GM12878 (cell line): ENCODE measurements at regions of chr3 and their contacts with region 1.

Region 1: GRCh38 chr3:138705675-138706074 is 97.1 kb downstream of the FAIM start:
- DNase-seq: no peak
- ATAC-seq: no peak
- H3K4me3 ChIP-seq: no peak overlapping the region
- H3K27ac ChIP-seq: no peak overlapping the region
- H3K4me1 ChIP-seq: no peaks in the 10 kb centered on the region
- H3K27me3 ChIP-seq: no peaks in the 10 kb centered on the region
- CTCF ChIP-seq: no peak
- EP300 ChIP-seq: no peak
- POLR2A ChIP-seq: no peak
- RAD21 ChIP-seq: no peak

Region 2: DNA sequence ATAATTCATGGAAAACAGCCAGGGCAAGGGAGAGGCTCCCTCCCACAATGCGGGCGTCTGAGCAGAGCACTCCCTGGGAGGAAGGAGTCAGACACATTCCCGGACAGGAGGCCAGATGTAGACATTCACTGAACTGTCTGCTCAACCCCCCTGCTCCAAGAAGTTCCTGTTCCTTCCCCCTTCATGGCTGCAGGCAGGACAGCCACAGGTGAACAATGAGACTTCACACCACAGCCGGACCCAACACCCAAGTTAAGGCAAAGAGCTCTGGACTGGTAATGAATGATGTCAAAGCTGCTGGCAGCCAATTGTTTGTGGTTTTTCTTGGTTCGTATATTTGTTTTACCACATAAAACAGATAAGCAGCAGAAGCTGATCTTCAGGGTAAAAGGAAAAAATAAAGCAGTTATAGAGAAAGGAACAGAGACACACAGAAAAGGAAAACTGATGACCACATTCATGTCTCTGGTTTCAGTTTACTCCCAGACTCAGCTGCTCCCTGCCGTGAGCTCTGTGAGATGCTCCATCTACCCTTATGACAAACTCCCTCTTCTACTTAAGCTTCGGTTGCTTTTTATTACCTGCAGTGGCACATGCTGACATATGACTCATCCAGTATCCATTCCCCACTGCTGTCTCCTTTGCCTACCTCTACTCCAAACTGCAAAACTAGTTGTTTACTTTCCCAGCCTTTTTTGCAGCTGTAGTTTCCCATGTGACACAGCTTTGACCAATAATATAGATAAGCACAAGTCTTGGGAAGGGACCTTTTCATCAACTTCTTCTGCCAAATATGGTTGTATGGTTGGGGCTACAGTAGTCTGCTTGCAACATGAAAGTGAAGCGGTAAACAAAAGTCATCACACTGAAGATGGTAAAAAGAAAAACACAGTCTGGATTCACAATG is 623.3 kb before region 1 on chr3:
- CTCF ChIA-PET with region 1: no interaction called
- POLR2A ChIA-PET with region 1: no interaction called
- RAD21 ChIA-PET with region 1: no interaction called
- SMC1A ChIA-PET with region 1: no interaction called
- in situ Hi-C with region 1: no loop called
- intact Hi-C with region 1: no loop called
- DNase-seq: peak; percentile 27
- ATAC-seq: peak; percentile 77
- H3K4me3 ChIP-seq: no peak overlapping the region
- H3K27ac ChIP-seq: no peak overlapping the region
- H3K4me1 ChIP-seq: peaks cover 8% of the 10 kb centered on the region
- H3K27me3 ChIP-seq: peaks cover 0 to 2% of the 10 kb centered on the region in 2 experiments; a peak in 2 of 4 replicates
- CTCF ChIP-seq: no peak
- EP300 ChIP-seq: no peak
- POLR2A ChIP-seq: no peak
- RAD21 ChIP-seq: no peak

Region 3: GRCh38 chr3:138513090-138513843 is 192.4 kb before region 1 on chr3:
- CTCF ChIA-PET with region 1: no interaction called
- POLR2A ChIA-PET with region 1: no interaction called
- RAD21 ChIA-PET with region 1: no interaction called
- SMC1A ChIA-PET with region 1: no interaction called
- in situ Hi-C with region 1: no loop called
- intact Hi-C with region 1: no loop called
- DNase-seq: peak; percentile 9
- ATAC-seq: peak; percentile 97
- H3K4me3 ChIP-seq: no peak overlapping the region
- H3K27ac ChIP-seq: no peak overlapping the region
- H3K4me1 ChIP-seq: peaks cover 3% of the 10 kb centered on the region; the same call in 1 of the 2 replicates
- H3K27me3 ChIP-seq: no peaks in the 10 kb centered on the region
- CTCF ChIP-seq: no peak
- EP300 ChIP-seq: peak in 1 of 2 experiments; percentile 80; a peak in 2 of 4 replicates
- POLR2A ChIP-seq: no peak
- RAD21 ChIP-seq: no peak

Region 4: DNA sequence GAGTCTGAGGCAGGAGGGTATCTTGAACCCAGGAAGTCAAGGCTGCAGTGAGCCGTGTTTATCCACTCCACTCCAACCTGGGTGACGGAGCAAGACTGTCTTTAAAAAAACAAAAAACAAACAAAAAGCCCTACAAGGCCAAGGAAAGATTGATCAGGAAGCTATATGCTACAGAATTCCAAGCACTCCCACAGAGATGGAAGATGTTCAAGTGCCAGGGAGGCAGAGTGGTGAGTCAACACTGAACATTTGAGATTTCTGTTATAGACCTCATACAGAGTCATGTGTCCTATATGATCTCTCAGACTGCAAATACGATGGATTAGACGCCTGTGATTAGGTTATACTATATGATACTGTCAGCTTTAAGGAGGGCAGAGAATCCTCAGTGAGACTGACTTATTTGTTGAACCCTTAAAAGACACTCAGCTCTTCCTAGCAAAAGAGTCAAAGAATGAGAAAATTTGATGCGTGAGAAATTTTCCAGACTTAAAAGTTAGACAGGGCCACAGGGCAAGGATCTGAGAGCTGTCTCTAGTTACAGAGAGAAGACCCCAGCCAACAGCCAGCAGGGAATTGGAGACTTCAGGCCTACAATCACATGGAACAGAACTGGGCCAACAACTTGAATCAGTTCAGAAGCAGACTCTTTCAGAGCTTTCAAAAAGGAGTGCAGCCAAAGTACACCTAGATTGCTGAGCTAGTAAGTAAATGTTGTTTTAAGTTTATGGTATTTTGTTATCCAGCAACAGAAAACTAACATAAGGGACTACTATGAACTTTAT is 21.5 kb after region 1 on chr3:
- CTCF ChIA-PET with region 1: no interaction called
- POLR2A ChIA-PET with region 1: no interaction called
- RAD21 ChIA-PET with region 1: no interaction called
- SMC1A ChIA-PET with region 1: no interaction called
- in situ Hi-C with region 1: no loop called
- intact Hi-C with region 1: no loop called
- DNase-seq: no peak
- ATAC-seq: no peak
- H3K4me3 ChIP-seq: no peak overlapping the region
- H3K27ac ChIP-seq: no peak overlapping the region
- H3K4me1 ChIP-seq: peaks cover 9% of the 10 kb centered on the region
- H3K27me3 ChIP-seq: no peaks in the 10 kb centered on the region
- CTCF ChIP-seq: no peak
- EP300 ChIP-seq: no peak
- POLR2A ChIP-seq: no peak
- RAD21 ChIP-seq: no peak

Region 5: GRCh38 chr3:139343895-139344856 is 638.5 kb after region 1 on chr3 and contains the start of gene MRPS22:
- CTCF ChIA-PET with region 1: no interaction called
- POLR2A ChIA-PET with region 1: no interaction called
- RAD21 ChIA-PET with region 1: no interaction called
- SMC1A ChIA-PET with region 1: no interaction called
- in situ Hi-C with region 1: loop called (anchors 10 kb)
- intact Hi-C with region 1: no loop called
- DNase-seq: peak; percentile 65
- ATAC-seq: peak; percentile 99
- H3K4me3 ChIP-seq: peak within 1 kb of the TSS; percentile 98
- H3K27ac ChIP-seq: peak within 1 kb of the TSS; percentile 93
- H3K4me1 ChIP-seq: no peaks in the 10 kb centered on the region
- H3K27me3 ChIP-seq: no peaks in the 10 kb centered on the region
- CTCF ChIP-seq: no peak
- EP300 ChIP-seq: 0 out of 4 replicates have a peak, but pooled peaks of 1 of the 2 experiments have one; percentile 13
- POLR2A ChIP-seq: peak; percentile 85
- RAD21 ChIP-seq: no peak
- polyA plus RNA-seq, gene MRPS22: 117 to 146 TPM

Region 6: DNA sequence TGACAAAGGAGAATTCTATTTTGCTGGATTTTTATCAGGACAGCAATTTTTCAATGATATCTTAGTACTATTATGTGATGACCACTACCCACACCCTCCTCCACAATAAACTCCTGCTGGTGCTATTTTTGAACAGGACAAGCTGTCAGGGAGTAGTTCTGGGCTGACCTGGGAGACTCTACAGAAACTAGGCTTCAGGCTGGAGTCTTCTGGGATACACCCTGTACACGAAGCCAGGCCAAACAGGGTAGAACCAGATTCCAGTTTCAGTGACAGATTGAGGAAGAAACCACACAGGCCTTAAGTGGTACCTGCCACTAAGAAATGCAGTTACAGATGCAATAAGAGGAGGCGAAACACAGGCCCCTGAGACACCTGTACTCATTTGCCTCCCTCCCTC is 959.3 kb after region 1 on chr3:
- CTCF ChIA-PET with region 1: no interaction called
- POLR2A ChIA-PET with region 1: no interaction called
- RAD21 ChIA-PET with region 1: no interaction called
- SMC1A ChIA-PET with region 1: no interaction called
- in situ Hi-C with region 1: no loop called
- intact Hi-C with region 1: no loop called
- DNase-seq: no peak
- ATAC-seq: no peak
- H3K4me3 ChIP-seq: no peak overlapping the region
- H3K27ac ChIP-seq: no peak overlapping the region
- H3K4me1 ChIP-seq: no peaks in the 10 kb centered on the region
- H3K27me3 ChIP-seq: no peaks in the 10 kb centered on the region
- CTCF ChIP-seq: no peak
- EP300 ChIP-seq: no peak
- POLR2A ChIP-seq: no peak
- RAD21 ChIP-seq: no peak